IMR-90 (cell line): ENCODE measurements at regions of chr6 and their contacts with region 1.

Region 1: GRCh38 chr6:155801046-155801445 is 345.4 kb upstream of the NOX3 start:
- DNase-seq: no peak
- ATAC-seq: no peak
- H3K4me3 ChIP-seq: no peak overlapping the region
- H3K27ac ChIP-seq: no peak overlapping the region
- H3K4me1 ChIP-seq: no peaks in the 10 kb centered on the region
- H3K27me3 ChIP-seq: no peaks in the 10 kb centered on the region
- CTCF ChIP-seq: no peak
- POLR2A ChIP-seq: no peak
- RAD21 ChIP-seq: no peak

Region 2: DNA sequence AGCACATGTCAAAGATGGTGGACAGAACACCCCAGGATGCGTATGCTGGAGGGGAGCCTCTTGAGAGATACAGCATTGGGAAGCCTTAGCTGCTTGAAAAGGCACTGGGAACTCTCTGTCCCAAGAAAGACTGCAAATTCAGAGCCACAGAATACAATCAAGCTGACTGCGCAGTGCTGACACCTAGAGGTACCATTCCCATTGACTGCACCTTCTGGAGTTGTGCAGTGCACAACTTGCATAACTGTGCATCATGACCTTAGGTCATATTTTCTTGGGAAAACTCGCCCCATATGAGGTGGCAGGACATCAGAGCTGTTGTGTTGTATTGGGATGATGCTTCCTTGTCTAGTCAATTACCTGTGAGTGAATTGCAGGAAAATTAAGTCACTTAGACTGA is 301.1 kb after region 1 on chr6:
- CTCF ChIA-PET with region 1: no interaction called
- POLR2A ChIA-PET with region 1: no interaction called
- dilution Hi-C with region 1: no loop called
- in situ Hi-C with region 1: no loop called
- intact Hi-C with region 1: loop called (anchors 10 kb)
- DNase-seq: peak; percentile 23
- ATAC-seq: peak; percentile 79; the same call in 1 of the 2 replicates
- H3K4me3 ChIP-seq: no peak overlapping the region
- H3K27ac ChIP-seq: no peak overlapping the region
- H3K4me1 ChIP-seq: no peaks in the 10 kb centered on the region
- H3K27me3 ChIP-seq: no peaks in the 10 kb centered on the region
- CTCF ChIP-seq: peak; percentile 36
- POLR2A ChIP-seq: no peak
- RAD21 ChIP-seq: peak; percentile 35; the same call in 1 of the 2 replicates